Heart right ventricle (tissue), 16 donors: ENCODE measurements at regions of chr9 and their contacts with region 1.

Region 1: DNA sequence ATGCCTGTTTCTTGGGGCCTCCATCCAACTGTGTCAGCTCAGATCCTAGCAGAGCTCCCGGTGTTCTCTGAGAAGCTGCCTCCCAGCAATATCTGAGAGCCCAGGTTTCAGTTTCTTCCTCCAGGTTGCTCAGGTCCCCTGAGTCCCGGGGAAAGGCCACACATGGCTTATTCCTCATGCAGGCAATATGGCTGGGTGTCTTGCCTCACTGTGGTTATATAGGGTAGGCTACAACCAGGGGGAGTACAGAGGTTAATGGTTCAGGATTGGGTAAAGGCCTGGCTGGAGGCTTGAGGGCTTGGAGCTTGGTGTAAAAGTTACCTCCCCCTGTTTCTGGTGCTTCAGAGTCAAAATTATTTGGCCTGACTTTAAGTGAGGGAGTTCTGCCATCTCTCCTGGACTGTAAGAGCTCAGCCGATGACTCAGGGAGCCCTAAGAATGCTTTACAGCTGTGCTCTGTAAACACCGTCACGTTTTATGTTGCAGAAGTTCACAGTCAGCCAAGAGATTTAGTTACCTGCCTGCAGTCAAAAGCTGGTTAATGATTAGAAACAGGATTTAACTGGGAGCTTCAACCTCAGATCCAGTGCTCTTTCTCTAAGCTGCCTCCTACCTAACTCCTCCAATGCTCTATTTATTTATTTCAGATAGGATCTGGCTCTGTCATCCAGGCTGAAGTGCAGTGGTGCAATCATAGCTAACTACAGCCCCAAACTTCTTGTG is 24.3 kb upstream of the UBAP2 start:
- DNase-seq: no peak
- ATAC-seq: peak in 4 of 8 donors; percentile 26 to 69 (median 52)
- H3K4me3 ChIP-seq: no peak overlapping the region
- H3K27ac ChIP-seq: peak overlapping the region in 2 of 10 donors; percentile 8 to 10
- H3K4me1 ChIP-seq: peaks cover 0 to 6% (median 0%) of the 10 kb centered on the region in 9 donors
- H3K27me3 ChIP-seq: no peaks in the 10 kb centered on the region
- CTCF ChIP-seq: no peak

Region 2: DNA sequence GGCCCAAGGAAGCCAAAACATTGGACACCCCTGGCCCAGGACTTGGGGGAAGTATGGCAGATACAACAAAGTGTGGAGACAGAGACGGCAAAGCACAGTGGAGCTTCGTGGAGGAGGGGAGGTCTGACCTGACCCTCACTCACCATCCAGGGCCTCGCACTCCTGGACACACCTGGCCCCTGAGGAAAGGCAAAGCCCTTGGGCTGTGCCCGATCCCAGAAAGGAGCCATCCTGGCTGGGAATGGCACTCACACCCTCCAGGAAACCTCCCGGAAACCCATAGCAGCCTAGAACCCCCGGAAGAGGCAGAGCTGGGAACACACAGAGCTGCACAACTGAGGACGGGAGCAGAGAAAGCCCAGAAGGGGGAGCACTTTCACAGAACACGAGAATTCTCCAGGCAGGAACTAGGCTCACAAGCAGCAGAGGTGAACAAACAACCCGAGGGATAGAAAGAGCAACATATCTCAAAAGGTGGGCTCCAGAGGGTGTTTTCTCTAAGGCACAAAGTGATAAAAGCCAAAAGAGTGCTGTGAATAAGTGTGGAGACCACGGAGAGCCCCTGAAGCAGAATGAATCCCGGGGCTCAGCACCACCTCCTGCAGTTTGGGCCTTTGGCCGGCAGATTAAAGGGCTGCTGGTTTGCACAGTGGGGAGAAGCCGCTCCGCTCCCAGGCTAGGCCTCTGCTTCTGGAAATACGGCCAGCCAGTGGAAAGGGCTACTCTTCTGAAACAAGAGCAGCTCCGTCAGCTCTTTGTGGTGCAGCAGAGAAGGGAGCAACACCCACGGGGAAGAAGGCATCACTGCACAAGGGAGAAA is 147.8 kb before region 1 on chr9:
- intact Hi-C with region 1: loop called in 4 of 10 experiments (anchors 5 to 10 kb)
- DNase-seq: peak in 1 of 2 donors; percentile 65
- ATAC-seq: peak in 7 of 8 donors; percentile 53 to 76 (median 70)
- H3K4me3 ChIP-seq: no peak overlapping the region
- H3K27ac ChIP-seq: peak overlapping the region in 8 of 10 donors; percentile 16 to 65 (median 23)
- H3K4me1 ChIP-seq: peaks cover 5 to 47% (median 24%) of the 10 kb centered on the region in 9 donors
- H3K27me3 ChIP-seq: no peaks in the 10 kb centered on the region
- CTCF ChIP-seq: peak; percentile 29 to 79 (median 66)

Region 3: GRCh38 chr9:33942471-33943083 is 130.5 kb before region 1 on chr9:
- intact Hi-C with region 1: no loop called
- DNase-seq: no peak
- ATAC-seq: no peak
- H3K4me3 ChIP-seq: no peak overlapping the region
- H3K27ac ChIP-seq: peak overlapping the region in 2 of 10 donors; percentile 12 to 29
- H3K4me1 ChIP-seq: peaks cover 0 to 18% (median 4%) of the 10 kb centered on the region in 9 donors
- H3K27me3 ChIP-seq: no peaks in the 10 kb centered on the region
- CTCF ChIP-seq: no peak

Region 4: GRCh38 chr9:34010979-34011378 is 62.0 kb before region 1 on chr9:
- intact Hi-C with region 1: loop called in 2 of 10 experiments (anchors 2 to 10 kb)
- DNase-seq: no peak
- ATAC-seq: no peak
- H3K4me3 ChIP-seq: no peak overlapping the region
- H3K27ac ChIP-seq: no peak overlapping the region
- H3K4me1 ChIP-seq: no peaks in the 10 kb centered on the region
- H3K27me3 ChIP-seq: no peaks in the 10 kb centered on the region
- CTCF ChIP-seq: peak in 6 of 9 donors; percentile 28 to 51 (median 38)

Region 5: DNA sequence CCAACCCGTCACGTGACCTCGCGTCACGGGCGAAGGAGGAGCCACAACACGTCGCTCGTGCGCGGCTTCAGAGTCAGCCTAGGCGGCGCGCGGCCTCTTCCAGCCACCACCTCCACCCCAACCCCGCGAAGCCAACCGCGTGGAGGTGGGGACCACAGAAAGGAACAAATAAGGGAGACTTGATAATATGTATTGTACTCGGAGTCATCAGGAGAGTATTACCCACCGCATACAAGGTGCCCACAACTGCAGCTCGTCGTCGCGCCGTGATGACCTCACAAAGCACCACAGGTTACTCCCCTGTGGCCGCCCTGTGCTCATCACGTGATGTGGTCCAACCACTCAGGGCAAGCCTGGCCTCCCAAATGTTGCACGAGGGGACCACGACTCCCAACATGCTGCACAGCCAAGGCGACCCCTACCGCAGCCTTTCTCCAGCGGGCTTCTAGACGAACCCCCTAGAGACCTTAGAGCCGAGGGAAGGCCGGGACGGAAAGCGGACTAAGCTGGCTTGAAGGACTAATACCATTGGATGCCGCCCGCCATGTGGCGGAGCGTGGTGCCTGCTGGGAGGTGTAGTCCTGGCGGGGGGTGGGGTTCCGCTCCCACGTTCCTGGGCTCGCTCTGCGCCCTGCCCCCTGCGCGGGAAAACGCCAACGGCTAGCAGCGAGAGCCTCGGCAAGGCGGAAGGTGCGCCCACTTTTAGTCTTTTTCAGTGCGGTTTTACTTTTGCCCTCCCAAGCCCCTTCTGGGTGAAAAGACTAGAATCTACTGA is 23.9 kb before region 1 on chr9:
- intact Hi-C with region 1: loop called in 1 of 10 experiments (anchors 2 kb)
- DNase-seq: peak; percentile 96 to 98
- ATAC-seq: peak; percentile 94 to 98 (median 96)
- H3K4me3 ChIP-seq: peak overlapping the region; percentile 89 to 99 (median 92)
- H3K27ac ChIP-seq: peak overlapping the region; percentile 82 to 98 (median 94)
- H3K4me1 ChIP-seq: peaks cover 4 to 36% (median 29%) of the 10 kb centered on the region in 9 donors
- H3K27me3 ChIP-seq: no peaks in the 10 kb centered on the region
- CTCF ChIP-seq: peak in 4 of 9 donors; percentile 6 to 29 (median 15)